ENCODE measurements at regions of chr19 and their contacts with region 1.

Region 1: DNA sequence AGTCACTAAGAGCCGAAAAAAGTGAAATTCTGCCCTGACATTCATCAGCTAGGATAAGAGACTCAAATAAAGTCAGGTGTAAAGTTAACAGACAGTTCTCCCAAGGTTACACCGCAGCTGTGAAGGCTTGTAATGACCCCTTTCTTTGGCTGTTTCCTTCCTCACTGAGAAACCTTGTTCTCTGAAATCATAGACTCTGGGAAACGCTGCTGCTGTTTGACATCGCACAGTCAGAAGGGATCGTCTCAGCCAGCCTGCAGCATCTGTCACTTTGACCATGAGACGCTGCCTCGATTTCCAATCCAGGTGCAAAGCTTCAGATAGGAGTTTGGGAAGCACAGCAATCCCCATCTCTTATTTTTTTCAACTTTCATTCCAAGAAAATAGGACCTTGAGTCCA is 678 bp downstream of the BCAT2 start:
- DNase-seq: peak; percentile 60
- H3K4me3 Mint-ChIP-seq: peak overlapping the region; percentile 92
- H3K27ac Mint-ChIP-seq: peak overlapping the region; percentile 90
- H3K4me1 Mint-ChIP-seq: peaks cover 29% of the 10 kb centered on the region
- H3K27me3 Mint-ChIP-seq: no peaks in the 10 kb centered on the region

Region 2: GRCh38 chr19:48713864-48714758 is 96.0 kb before region 1 on chr19:
- intact Hi-C with region 1: no loop called
- DNase-seq: peak; percentile 100
- H3K4me3 Mint-ChIP-seq: peak overlapping the region; percentile 88
- H3K27ac Mint-ChIP-seq: peak overlapping the region; percentile 87
- H3K4me1 Mint-ChIP-seq: peaks cover 12% of the 10 kb centered on the region
- H3K27me3 Mint-ChIP-seq: no peaks in the 10 kb centered on the region

Region 3: DNA sequence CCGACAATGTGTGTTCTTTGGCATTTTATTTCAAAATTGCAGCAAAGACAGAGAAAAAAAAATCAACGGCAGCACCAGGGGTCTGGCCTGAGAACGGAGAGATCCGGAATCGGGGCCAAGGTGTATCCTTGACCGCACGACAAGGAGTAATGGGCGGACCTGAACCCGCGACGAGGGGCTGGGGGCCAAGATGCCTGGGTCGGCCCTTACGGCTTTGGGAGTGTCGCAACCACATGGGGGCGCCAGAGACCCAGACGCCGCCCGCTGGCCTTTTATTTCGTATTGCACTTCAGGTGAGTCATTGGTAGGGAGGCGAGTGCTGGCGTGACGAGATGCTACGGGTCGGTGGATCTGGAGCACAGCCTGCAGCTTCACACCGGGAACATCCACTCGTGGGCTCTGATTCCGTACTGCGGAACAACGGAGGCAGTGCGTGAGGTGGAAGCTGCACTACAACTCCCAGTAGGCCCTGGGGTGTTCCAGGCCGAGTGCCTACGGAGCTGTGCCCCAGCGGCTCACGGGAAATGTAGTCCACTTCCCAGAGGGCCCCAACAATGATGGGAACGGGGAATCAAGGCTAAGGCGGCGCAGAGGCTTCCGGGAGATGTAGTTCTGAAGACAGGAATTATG is 15.0 kb before region 1 on chr19:
- intact Hi-C with region 1: loop called (anchors 2 kb)
- DNase-seq: peak; percentile 95
- H3K4me3 Mint-ChIP-seq: peak overlapping the region; percentile 95
- H3K27ac Mint-ChIP-seq: peak overlapping the region; percentile 90
- H3K4me1 Mint-ChIP-seq: peaks cover 12% of the 10 kb centered on the region
- H3K27me3 Mint-ChIP-seq: no peaks in the 10 kb centered on the region

Region 4: DNA sequence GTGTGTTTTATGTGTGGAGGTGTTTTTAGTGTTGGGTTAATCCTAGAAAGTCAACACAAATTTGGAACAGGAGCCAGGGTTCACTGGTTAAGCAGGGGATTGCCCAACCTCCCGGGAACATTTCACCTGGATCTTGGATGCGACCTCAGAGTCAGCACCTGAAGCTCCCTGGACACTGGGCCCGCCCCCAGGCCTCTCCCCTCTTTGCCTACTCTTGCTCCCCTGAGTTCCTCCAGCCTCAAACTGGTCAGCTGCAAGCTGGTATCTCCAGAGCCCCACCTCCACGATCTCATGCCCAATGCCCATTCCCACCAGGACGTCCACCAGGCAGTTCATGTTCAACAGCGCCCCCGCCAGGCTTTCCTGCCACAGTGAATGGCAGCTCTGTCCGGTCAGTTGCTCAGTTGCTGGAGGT is 16.5 kb after region 1 on chr19:
- intact Hi-C with region 1: no loop called
- DNase-seq: no peak
- H3K4me3 Mint-ChIP-seq: no peak overlapping the region
- H3K27ac Mint-ChIP-seq: no peak overlapping the region
- H3K4me1 Mint-ChIP-seq: no peaks in the 10 kb centered on the region
- H3K27me3 Mint-ChIP-seq: no peaks in the 10 kb centered on the region